ENCODE measurements at regions of chr20 and their contacts with region 1.

Region 1: DNA sequence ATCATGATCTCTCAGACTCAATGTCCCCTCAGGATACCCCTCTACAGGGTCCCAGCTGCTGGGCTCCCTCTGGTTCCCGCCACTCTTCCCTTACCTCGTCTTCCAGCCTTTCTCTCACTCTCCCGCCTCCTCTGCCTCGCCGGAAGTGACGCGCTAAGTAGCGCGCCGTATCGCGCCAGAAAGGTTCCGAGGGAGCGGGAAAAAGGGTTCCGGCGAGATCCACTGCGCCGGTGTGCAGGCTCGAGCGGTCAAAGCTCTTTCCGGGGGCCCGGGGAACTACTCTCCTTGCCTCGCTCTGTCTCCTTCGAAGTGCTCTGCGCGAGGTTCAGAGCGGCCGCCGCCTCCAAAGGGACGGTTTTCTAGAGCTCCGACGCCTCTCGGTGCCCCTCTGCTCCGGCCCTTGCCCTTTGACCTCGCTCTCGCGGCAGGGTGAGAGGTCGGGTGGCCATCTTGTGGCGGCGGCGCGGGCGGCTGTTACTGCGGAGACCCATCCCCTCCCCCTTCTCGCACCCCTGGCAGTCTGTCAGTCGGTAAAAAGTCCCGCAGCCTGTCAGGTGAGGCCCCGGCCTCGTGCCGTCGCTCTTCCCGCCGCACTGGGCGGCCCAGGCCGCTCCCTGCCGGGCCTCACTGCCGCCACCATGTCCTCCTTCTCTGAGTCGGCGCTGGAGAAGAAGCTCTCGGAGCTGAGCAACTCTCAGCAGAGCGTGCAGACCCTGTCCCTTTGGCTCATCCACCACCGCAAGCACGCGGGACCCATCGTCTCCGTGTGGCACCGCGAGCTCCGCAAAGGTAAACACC is at the starts of genes RPRD1B and TTI1:
- DNase-seq: peak; percentile 95
- ATAC-seq: peak; percentile 85
- H3K4me3 ChIP-seq: peak within 1 kb of the TSS; percentile 94
- H3K27ac ChIP-seq: peak within 1 kb of the TSS; percentile 75
- H3K4me1 ChIP-seq: peaks cover 63% of the 10 kb centered on the region
- H3K27me3 ChIP-seq: no peaks in the 10 kb centered on the region
- CTCF ChIP-seq: no peak
- total RNA-seq, gene RPRD1B: 40.1 and 43.6 TPM in 2 replicates
- total RNA-seq, gene TTI1: 21.8 and 23.2 TPM in 2 replicates

Region 2: GRCh38 chr20:38144974-38145728 is 111.6 kb after region 1 on chr20:
- CTCF ChIA-PET with region 1: no interaction called
- POLR2A ChIA-PET with region 1: interaction called, 10 read pairs
- intact Hi-C with region 1: no loop called
- DNase-seq: peak; percentile 83
- ATAC-seq: peak; percentile 21
- H3K4me3 ChIP-seq: no peak overlapping the region
- H3K27ac ChIP-seq: peak overlapping the region; percentile 95
- H3K4me1 ChIP-seq: peaks cover 29% of the 10 kb centered on the region
- H3K27me3 ChIP-seq: no peaks in the 10 kb centered on the region
- CTCF ChIP-seq: no peak

Region 3: DNA sequence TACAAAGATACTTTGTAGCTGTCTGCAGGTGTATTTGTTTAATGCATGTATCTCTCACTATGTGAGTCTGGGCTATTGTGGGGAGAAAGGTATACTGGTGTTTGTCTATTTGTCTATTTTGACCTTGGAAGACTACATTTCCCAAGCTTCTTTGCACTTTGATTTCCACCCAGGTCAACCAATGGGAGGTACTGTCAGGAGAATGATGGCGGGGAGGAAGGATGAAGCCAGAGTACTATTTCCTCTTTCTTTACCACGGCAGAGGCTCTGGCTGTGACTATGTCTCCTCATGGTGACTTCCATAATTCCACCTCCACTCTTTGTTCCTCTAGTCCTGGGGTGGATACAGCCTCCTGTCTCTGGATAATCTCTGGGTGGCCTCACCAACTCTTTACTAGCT is 335.9 kb after region 1 on chr20:
- CTCF ChIA-PET with region 1: no interaction called
- POLR2A ChIA-PET with region 1: no interaction called
- intact Hi-C with region 1: no loop called
- DNase-seq: peak; percentile 16
- ATAC-seq: no peak; the same call in 1 of the 2 replicates
- H3K4me3 ChIP-seq: no peak overlapping the region
- H3K27ac ChIP-seq: no peak overlapping the region
- H3K4me1 ChIP-seq: no peaks in the 10 kb centered on the region
- H3K27me3 ChIP-seq: peaks cover 37% of the 10 kb centered on the region
- CTCF ChIP-seq: no peak